ENCODE measurements at regions of chr10 and their contacts with region 1.

Region 1: DNA sequence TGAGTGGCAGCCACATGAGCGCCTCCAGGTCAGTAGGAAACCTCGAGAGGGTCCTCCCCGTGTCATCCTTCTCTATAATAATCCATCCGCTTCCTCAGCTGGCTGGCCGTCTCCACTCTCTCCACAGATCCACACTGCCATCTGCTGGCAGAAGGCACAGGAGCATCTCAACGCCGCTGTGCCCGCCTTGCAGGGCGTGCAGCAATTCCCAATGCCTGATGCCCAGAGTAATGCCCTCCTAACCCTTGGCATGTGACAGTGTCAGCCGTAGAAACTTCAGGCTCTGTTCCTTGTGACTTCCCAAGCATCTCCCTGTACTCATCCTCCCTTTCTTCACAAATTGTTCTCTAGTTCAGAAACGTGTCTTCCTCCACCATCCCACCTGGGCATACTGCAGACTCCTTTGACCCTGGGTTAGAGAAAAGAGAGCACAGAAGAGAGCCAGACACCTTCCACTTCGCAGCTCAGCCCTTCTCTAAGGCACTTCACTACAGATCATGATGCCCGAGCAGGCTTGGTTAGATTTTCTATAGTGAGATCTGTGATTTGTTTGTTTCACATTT is 70.8 kb downstream of the XPNPEP1 start:
- DNase-seq: peak; percentile 82
- ATAC-seq: peak; percentile 96
- H3K4me3 Mint-ChIP-seq: no peak overlapping the region
- H3K27ac Mint-ChIP-seq: no peak overlapping the region
- H3K4me1 Mint-ChIP-seq: peaks cover 14% of the 10 kb centered on the region
- H3K27me3 Mint-ChIP-seq: no peaks in the 10 kb centered on the region
- CTCF ChIP-seq: peak; percentile 89

Region 2: DNA sequence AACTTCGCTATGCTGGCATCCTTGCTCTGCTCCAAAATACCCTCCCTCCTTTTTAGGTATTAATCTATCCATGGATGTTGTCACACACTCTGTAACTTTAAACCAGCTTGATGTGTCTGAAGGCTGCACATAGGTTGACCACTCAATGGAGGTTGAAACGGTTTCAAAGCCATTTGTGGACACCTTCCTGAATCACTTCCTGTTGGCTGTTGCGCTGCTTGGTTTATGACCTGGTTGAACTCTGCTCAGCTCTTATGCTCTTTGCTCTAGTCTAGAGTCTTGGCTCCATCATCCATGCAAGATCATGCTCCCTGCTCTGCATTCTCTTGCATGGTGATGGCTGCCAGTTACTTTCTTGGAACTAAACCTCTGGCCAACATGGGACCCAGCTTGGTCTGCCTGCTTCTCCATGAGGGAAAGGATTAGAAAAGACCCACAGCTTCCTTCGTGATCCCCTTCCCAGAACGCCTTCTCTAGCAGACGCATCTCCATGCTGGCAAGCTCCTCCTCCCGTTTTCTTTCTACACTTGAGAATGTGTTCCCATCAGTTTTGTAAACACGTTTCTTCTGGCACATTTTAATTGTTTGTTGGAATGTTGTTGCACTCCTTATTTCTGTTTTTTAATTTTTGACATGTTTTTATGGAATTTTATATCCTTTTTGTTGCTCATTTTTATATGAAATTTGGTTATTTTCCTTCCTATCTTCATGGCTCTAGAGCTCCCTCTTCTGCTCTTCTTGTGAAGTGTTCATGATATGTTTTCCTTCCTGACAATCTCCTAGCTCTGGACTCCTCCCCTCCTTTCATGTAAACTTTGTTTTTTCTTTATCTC is 79.1 kb before region 1 on chr10:
- CTCF ChIA-PET with region 1: interaction called, 10 read pairs
- POLR2A ChIA-PET with region 1: no interaction called
- intact Hi-C with region 1: no loop called
- DNase-seq: no peak
- ATAC-seq: no peak
- H3K4me3 Mint-ChIP-seq: no peak overlapping the region
- H3K27ac Mint-ChIP-seq: no peak overlapping the region
- H3K4me1 Mint-ChIP-seq: no peaks in the 10 kb centered on the region
- H3K27me3 Mint-ChIP-seq: peaks cover 4% of the 10 kb centered on the region
- CTCF ChIP-seq: peak; percentile 57

Region 3: GRCh38 chr10:109835257-109835656 is 17.3 kb before region 1 on chr10:
- CTCF ChIA-PET with region 1: interaction called, 10 read pairs
- POLR2A ChIA-PET with region 1: no interaction called
- intact Hi-C with region 1: no loop called
- DNase-seq: no peak
- ATAC-seq: no peak
- H3K4me3 Mint-ChIP-seq: no peak overlapping the region
- H3K27ac Mint-ChIP-seq: no peak overlapping the region
- H3K4me1 Mint-ChIP-seq: no peaks in the 10 kb centered on the region
- H3K27me3 Mint-ChIP-seq: peaks cover 9% of the 10 kb centered on the region
- CTCF ChIP-seq: no peak

Region 4: DNA sequence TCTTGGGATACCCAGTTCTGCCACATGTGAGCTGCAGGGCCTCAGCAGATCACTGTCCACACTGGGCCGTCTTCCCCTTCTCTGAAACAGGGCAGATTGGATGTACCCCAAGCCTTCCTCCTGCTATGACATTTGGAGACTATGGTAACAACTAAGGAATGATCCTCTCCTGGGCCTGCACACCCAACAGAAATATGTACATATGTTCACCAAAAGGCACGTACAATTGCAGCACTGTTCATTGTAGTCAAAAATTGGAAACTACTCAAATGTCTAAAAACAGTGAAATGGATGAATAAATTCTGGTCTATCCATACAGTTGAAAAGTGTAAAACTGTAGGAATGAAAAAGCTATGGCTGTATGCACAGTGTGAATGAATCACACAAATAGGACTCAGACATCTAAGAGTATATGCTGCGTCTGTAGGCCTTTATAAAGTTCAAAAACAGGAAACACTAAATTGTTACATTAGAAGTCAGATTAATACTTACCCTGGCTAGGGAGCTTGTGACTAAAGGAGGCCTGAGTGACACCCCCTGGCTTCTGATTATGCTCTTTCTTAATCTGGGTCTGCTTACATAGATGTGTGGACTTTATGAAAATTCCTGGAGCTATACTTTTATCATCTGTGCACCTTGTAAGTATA is 86.9 kb after region 1 on chr10:
- CTCF ChIA-PET with region 1: no interaction called
- POLR2A ChIA-PET with region 1: no interaction called
- intact Hi-C with region 1: no loop called
- DNase-seq: no peak
- ATAC-seq: peak; percentile 34
- H3K4me3 Mint-ChIP-seq: no peak overlapping the region
- H3K27ac Mint-ChIP-seq: no peak overlapping the region
- H3K4me1 Mint-ChIP-seq: peaks cover 48% of the 10 kb centered on the region
- H3K27me3 Mint-ChIP-seq: no peaks in the 10 kb centered on the region
- CTCF ChIP-seq: no peak

Region 5: GRCh38 chr10:110547139-110547761 is 694.7 kb after region 1 on chr10:
- CTCF ChIA-PET with region 1: no interaction called
- POLR2A ChIA-PET with region 1: no interaction called
- intact Hi-C with region 1: no loop called
- DNase-seq: no peak
- ATAC-seq: peak; percentile 77
- H3K4me3 Mint-ChIP-seq: no peak overlapping the region
- H3K27ac Mint-ChIP-seq: no peak overlapping the region
- H3K4me1 Mint-ChIP-seq: peaks cover 10% of the 10 kb centered on the region
- H3K27me3 Mint-ChIP-seq: peaks cover 21% of the 10 kb centered on the region
- CTCF ChIP-seq: peak; percentile 91